CD4-positive, alpha-beta memory T cell (primary cell): ENCODE measurements at regions of chr17 and their contacts with region 1.

Region 1: GRCh38 chr17:3683054-3683511 is 12.9 kb downstream of the P2RX5 start:
- DNase-seq: peak in 4 of 5 donors; percentile 55 to 62 (median 58)
- H3K4me3 ChIP-seq: no peak overlapping the region
- H3K4me3 Mint-ChIP-seq: peak overlapping the region in 1 of 8 donors; percentile 21
- H3K27ac ChIP-seq: no peak overlapping the region
- H3K27ac Mint-ChIP-seq: peak overlapping the region in 2 of 7 donors; percentile 65 to 70
- H3K4me1 ChIP-seq: peaks cover 9% of the 10 kb centered on the region
- H3K4me1 Mint-ChIP-seq: peaks cover 6 to 25% (median 7%) of the 10 kb centered on the region in 4 donors
- H3K27me3 ChIP-seq: no peaks in the 10 kb centered on the region
- H3K27me3 Mint-ChIP-seq: no peaks in the 10 kb centered on the region

Region 2: DNA sequence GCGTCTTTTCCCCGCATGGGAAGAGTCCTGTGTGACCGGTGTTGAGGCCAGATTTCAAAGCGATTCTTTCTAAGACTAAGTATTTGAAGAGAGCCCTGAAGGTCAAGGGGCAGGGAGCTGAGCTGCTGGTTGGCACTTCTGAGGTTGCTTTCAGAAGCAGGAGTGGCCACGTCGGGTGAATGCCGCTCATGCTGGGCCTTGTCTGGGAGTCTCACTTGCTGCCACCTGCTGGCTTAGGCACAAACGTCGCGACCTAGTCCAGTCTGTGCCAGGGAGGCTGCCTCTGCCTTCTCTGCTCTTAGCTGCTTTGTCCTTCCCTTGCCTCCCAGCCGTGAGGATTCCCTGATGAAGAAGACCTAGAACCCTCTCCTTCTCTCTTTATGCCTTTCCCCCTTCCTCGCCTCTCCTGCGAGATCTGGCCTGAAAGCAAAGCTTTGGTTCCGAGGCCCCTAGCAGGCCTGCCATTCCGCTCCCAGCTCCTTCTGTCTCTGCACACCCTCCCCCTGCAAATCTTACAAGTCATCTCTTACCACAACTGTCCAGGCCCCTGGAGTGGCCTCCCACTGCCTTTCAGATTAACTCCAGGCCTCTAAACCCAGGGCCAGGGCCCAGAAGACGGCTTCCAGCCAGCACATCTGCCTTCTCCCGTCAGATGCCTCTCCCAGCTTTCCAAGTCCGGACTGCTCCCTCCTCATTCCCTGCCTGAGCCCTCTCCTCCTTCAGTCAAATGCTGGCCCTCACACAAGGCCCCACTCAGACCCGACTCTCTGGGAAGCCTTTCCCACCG is 35.1 kb before region 1 on chr17:
- CTCF ChIA-PET with region 1: no interaction called
- POLR2A ChIA-PET with region 1: no interaction called
- intact Hi-C with region 1: no loop called
- DNase-seq: peak in 3 of 5 donors; percentile 20 to 26 (median 21)
- H3K4me3 ChIP-seq: no peak overlapping the region
- H3K4me3 Mint-ChIP-seq: no peak overlapping the region
- H3K27ac ChIP-seq: no peak overlapping the region
- H3K27ac Mint-ChIP-seq: no peak overlapping the region
- H3K4me1 ChIP-seq: no peaks in the 10 kb centered on the region
- H3K4me1 Mint-ChIP-seq: peaks cover 0 to 3% (median 0%) of the 10 kb centered on the region in 4 donors
- H3K27me3 ChIP-seq: no peaks in the 10 kb centered on the region
- H3K27me3 Mint-ChIP-seq: no peaks in the 10 kb centered on the region

Region 3: DNA sequence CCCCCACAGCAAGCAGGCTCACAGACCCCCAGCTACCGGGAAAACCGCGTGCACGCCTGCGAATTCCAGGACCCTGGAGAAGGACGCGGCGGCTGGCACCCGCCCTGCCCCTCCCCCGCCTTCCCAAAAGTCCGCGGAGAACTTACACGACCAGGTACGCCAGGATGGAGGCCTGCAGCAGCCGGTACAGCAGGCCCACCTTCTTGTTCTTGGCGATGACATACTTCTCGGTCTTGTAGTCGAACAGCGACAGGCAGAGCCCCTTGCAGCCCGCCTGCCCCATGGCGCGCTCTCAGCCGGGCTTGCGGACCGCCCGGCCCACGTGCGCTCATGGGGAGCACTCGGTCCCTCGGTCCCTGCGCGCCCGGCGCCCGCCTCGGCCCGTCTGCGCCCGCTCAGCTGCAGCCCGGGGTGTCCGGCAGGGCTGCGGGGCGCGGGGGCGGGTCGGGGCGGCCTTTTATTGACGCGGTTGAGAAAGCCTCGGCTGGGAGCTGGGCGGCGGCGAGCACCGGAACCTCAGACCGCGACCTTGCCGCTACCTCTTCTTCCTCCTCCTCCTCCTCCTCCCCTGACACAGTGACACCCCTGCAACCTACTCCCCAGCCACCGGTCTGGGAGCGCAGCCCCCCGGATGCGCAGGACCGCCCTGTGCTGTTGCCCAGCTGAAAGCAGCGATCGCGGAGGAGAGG is 12.8 kb after region 1 on chr17 and contains the start of gene P2RX5:
- CTCF ChIA-PET with region 1: interaction called, 15 read pairs
- POLR2A ChIA-PET with region 1: interaction called, 3 read pairs
- intact Hi-C with region 1: no loop called
- DNase-seq: peak; percentile 32 to 44 (median 37)
- H3K4me3 ChIP-seq: peak within 1 kb of the TSS; percentile 42 to 74
- H3K4me3 Mint-ChIP-seq: peak within 1 kb of the TSS; percentile 94 to 98 (median 96)
- H3K27ac ChIP-seq: peak within 1 kb of the TSS; percentile 48
- H3K27ac Mint-ChIP-seq: peak within 1 kb of the TSS; percentile 35 to 95 (median 87)
- H3K4me1 ChIP-seq: peaks cover 20% of the 10 kb centered on the region
- H3K4me1 Mint-ChIP-seq: peaks cover 8 to 36% (median 20%) of the 10 kb centered on the region in 4 donors
- H3K27me3 ChIP-seq: no peaks in the 10 kb centered on the region
- H3K27me3 Mint-ChIP-seq: no peaks in the 10 kb centered on the region
- total RNA-seq, gene P2RX5: 13.8 to 16.0 TPM

Region 4: GRCh38 chr17:3723556-3724369 is 40.7 kb after region 1 on chr17 and contains the start of gene HASPIN:
- CTCF ChIA-PET with region 1: interaction called, 17 read pairs
- POLR2A ChIA-PET with region 1: interaction called, 3 read pairs
- intact Hi-C with region 1: loop called (anchors 2 kb)
- DNase-seq: peak; percentile 88 to 92 (median 91)
- H3K4me3 ChIP-seq: peak within 1 kb of the TSS; percentile 59 to 95
- H3K4me3 Mint-ChIP-seq: peak within 1 kb of the TSS; percentile 86 to 95 (median 94)
- H3K27ac ChIP-seq: peak within 1 kb of the TSS; percentile 74
- H3K27ac Mint-ChIP-seq: peak within 1 kb of the TSS; percentile 75 to 95 (median 93)
- H3K4me1 ChIP-seq: peaks cover 36% of the 10 kb centered on the region
- H3K4me1 Mint-ChIP-seq: peaks cover 15 to 44% (median 28%) of the 10 kb centered on the region in 4 donors
- H3K27me3 ChIP-seq: no peaks in the 10 kb centered on the region
- H3K27me3 Mint-ChIP-seq: no peaks in the 10 kb centered on the region
- total RNA-seq, gene HASPIN: 0.28 to 0.41 TPM